Activated naive CD4-positive, alpha-beta T cell treated with anti-CD3 and anti-CD28 coated beads for 36 hours (primary cell): ENCODE measurements at regions of chr22 and their contacts with region 1.

Region 1: GRCh38 chr22:20741634-20742581 is 32.0 kb upstream of the SERPIND1 start:
- DNase-seq: peak; percentile 63
- H3K4me3 Mint-ChIP-seq: no peak overlapping the region
- H3K27ac Mint-ChIP-seq: no peak overlapping the region
- H3K4me1 Mint-ChIP-seq: peaks cover 1% of the 10 kb centered on the region
- H3K27me3 Mint-ChIP-seq: no peaks in the 10 kb centered on the region

Region 2: DNA sequence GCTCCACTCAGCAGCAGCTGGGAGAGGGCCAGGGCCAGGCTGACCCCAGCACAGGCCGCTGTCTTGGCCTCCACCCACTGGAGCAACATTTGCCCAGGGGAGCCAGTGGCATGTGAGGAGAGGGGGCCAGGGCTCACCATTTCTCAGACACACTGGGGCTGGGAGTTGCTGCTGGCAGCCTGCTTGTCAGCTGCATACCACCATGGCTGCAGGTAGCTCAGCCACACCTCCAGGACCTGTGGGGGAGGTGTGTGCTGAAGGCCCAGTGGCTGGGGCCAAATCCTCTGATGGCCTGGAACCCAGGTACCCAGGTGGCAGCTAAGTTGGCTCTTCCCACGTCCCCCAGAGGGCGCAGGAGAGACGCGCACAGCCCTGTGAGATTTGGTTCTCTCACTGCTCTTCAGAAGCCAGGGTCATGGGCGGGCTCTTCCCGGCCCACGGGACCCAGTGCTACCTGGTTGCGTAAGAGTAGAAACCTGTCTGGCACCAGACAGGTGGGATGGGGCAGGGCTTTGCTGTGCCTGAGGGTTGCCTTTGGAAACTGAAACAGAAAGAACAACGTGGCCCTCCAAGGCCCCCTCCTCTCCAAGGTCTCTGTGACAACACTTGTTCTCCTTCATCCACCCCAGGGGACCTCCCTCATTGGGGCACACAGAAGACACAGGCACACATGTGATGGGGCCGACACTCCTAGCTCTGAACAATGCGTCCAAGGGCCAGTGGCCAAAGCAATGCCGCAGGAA is 135.7 kb before region 1 on chr22:
- CTCF ChIA-PET with region 1: interaction called, 11 read pairs
- intact Hi-C with region 1: loop called (anchors 1 kb)
- DNase-seq: peak; percentile 81
- H3K4me3 Mint-ChIP-seq: no peak overlapping the region
- H3K27ac Mint-ChIP-seq: no peak overlapping the region
- H3K4me1 Mint-ChIP-seq: peaks cover 11% of the 10 kb centered on the region
- H3K27me3 Mint-ChIP-seq: no peaks in the 10 kb centered on the region

Region 3: DNA sequence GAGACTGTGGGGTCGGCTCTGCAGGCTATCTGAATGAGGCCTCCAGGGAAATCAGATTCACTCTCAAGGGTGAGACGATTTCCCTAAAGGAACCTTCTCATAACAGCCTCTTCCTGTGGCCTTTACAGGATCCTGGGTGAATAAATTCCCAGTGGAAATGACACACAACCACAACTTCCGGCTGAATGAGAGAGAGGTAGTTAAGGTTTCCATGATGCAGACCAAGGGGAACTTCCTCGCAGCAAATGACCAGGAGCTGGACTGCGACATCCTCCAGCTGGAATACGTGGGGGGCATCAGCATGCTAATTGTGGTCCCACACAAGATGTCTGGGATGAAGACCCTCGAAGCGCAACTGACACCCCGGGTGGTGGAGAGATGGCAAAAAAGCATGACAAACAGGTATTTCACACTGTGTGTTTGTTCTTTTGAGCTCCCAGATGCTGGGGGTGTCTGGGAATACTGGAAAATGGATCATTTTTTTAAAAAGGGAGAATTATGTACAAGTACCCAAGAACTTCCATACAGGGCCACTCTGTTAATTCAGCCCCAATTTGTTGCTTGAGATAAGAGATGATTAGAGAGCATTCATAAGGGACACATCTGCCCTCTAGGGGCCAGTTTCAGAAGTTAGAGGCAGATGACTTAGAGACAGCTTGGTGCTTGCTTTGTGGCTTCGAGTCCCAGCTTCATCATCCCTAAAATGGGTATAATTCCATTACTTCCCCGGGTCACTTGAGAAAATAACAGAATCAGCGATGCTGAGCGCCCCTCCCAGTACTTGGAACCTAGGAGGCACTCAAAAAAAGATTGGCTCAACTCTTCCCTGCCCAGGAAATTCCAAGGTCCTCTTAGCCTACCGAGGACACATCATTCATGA is 42.2 kb after region 1 on chr22:
- CTCF ChIA-PET with region 1: interaction called, 10 read pairs
- intact Hi-C with region 1: no loop called
- DNase-seq: peak; percentile 67
- H3K4me3 Mint-ChIP-seq: no peak overlapping the region
- H3K27ac Mint-ChIP-seq: no peak overlapping the region
- H3K4me1 Mint-ChIP-seq: peaks cover 8% of the 10 kb centered on the region
- H3K27me3 Mint-ChIP-seq: no peaks in the 10 kb centered on the region